Activated CD8-positive, alpha-beta T cell treated with anti-CD3 and anti-CD28 coated beads for 36 hours (primary cell): ENCODE measurements at regions of chr12 and their contacts with region 1.

Region 1: DNA sequence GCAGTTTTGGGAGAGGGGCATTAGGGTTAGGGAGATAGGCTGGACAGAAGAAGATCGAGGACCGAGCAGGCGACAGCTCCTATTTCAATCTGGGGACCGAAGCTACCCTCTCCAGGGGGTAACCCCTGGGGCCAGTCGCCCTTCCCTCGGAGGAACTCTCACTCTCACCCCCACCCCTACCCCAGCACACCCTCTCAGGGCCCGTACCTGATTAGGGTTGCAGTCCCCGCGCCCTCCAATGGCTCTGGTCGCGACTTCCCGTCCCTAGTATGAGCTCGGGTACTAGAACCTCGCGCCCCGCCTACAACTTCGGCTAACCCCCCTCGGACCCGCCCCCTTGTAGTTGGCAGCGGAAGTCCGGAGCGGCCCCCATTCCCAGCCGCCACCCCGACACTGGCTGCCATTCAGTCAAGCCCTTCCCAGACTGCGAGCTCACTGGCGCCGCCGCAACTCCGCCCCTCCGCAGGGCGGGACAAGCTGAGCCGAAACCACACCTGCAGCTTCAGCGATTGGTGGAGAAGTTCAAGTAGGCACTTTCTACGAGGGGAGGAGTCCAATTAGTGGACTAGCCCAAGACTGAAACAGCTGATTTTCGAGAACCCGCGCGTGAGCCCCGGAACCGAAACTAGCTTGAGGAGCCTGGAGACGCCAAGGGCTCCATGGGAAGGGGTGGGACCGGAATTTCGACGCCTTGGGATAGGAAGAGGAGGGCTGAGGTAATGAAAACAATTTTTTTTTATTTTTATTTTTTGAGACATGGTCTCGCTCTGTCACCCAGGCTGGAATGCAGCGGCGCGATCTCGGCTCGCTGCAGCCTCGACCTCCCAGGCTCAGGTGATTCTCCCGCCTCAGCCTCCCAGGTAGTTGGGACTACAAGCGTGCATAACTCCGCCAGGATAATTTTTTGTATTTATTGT is at the start of gene STAT2:
- DNase-seq: peak; percentile 99
- ATAC-seq: peak; percentile 97
- H3K4me3 Mint-ChIP-seq: peak within 1 kb of the TSS; percentile 81
- H3K27ac Mint-ChIP-seq: peak within 1 kb of the TSS; percentile 95
- H3K4me1 Mint-ChIP-seq: peaks cover 20% of the 10 kb centered on the region
- H3K27me3 Mint-ChIP-seq: no peaks in the 10 kb centered on the region
- CTCF ChIP-seq: no peak
- total RNA-seq, gene STAT2: 64.4 to 69.7 TPM

Region 2: GRCh38 chr12:56224102-56224701 is 135.9 kb before region 1 on chr12 and contains the start of gene NABP2:
- CTCF ChIA-PET with region 1: interaction called, 3 read pairs
- POLR2A ChIA-PET with region 1: interaction called, 10 read pairs
- intact Hi-C with region 1: no loop called
- DNase-seq: peak; percentile 97
- ATAC-seq: peak; percentile 81
- H3K4me3 Mint-ChIP-seq: peak within 1 kb of the TSS; percentile 98
- H3K27ac Mint-ChIP-seq: peak within 1 kb of the TSS; percentile 87
- H3K4me1 Mint-ChIP-seq: peaks cover 27% of the 10 kb centered on the region
- H3K27me3 Mint-ChIP-seq: no peaks in the 10 kb centered on the region
- CTCF ChIP-seq: peak; percentile 89
- total RNA-seq, gene NABP2: 58.7 to 60.2 TPM

Region 3: DNA sequence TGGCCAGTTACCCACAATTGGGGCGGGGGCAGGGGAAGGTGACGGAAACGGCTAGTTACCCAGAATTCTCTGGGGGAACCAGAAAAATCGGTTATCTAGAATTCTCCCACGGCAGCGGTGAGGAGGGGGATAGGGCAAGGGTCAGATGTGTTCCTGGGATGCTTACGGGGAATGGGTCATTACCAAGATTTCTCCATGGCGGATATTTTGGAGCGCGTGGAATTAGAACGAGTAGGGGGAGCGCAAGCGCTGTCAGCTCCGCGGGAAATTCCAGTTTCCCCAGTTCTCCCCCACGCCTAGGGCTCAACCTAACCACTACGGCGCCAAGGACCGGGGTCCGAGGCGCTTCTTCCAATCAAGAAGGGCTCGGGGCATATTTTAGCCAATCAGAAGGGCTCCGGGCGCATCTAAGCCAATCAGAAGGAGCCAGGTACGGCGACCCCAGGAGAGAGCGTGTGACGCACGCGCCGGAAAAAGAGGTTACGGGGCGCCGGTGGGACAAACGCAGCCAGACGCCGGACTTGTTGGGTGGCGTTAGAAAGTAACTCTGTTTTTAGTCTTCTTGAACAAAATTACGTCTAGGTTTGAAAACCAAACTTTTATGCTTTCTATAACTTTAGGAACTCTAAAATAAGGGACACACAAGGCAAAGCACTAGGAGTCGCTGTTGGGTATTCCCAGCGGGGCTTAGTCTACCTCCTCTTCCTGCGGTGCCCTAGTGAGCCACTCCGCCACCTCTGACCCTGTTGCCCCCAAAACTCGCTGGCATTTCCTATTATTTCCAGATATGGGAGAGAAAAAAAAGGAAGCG is 26.2 kb before region 1 on chr12 and contains the start of gene PAN2:
- CTCF ChIA-PET with region 1: interaction called, 13 read pairs
- POLR2A ChIA-PET with region 1: interaction called, 49 read pairs
- intact Hi-C with region 1: loop called (anchors 2 kb)
- DNase-seq: peak; percentile 98
- ATAC-seq: peak; percentile 87
- H3K4me3 Mint-ChIP-seq: peak within 1 kb of the TSS; percentile 86
- H3K27ac Mint-ChIP-seq: peak within 1 kb of the TSS; percentile 99
- H3K4me1 Mint-ChIP-seq: peaks cover 40% of the 10 kb centered on the region
- H3K27me3 Mint-ChIP-seq: no peaks in the 10 kb centered on the region
- CTCF ChIP-seq: peak; percentile 61
- total RNA-seq, gene PAN2: 55.7 to 69.0 TPM

Region 4: DNA sequence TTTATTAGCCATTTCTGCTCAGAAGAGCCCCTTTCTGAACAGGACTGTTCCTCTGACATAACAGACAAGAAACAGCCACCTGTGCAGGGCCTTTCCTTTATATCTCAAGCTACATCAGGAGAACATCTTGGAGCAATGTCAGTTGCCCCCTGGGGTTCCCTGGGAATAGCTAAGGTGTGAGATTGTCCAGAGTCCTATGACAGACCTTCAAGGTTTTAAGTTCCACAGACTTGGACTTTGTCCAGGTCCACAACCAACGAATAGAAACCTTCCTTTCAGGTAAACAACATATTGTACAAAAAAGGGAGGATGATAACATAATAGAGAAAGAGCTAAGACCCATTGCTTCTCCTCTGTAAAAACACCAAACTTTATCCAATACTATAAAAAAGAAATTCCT is 18.5 kb before region 1 on chr12:
- CTCF ChIA-PET with region 1: interaction called, 12 read pairs
- POLR2A ChIA-PET with region 1: interaction called, 63 read pairs
- intact Hi-C with region 1: loop called (anchors 2 kb)
- DNase-seq: no peak
- ATAC-seq: no peak
- H3K4me3 Mint-ChIP-seq: no peak overlapping the region
- H3K27ac Mint-ChIP-seq: peak overlapping the region; percentile 10
- H3K4me1 Mint-ChIP-seq: peaks cover 36% of the 10 kb centered on the region
- H3K27me3 Mint-ChIP-seq: no peaks in the 10 kb centered on the region
- CTCF ChIP-seq: no peak

Region 5: DNA sequence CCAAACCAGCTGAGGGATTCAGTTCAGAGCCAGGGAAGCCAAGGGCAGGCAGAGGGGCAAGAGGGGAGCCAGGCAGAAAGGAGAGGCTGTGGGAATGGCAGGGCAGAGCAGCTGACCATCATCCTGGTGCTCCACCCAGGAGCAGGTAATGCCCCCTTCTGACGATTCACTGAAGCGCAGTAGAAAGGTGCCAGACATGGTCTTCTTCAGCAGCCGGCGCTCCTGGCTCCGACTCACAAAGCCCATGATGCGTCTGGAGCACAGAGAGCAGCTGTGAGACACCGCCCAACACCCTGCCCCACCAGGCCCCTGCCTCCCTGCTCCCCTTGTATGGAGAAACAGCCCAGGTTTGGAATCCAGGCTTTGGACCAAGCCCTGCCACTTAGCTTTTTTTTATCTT is 13.4 kb before region 1 on chr12:
- CTCF ChIA-PET with region 1: interaction called, 17 read pairs
- POLR2A ChIA-PET with region 1: interaction called, 63 read pairs
- intact Hi-C with region 1: no loop called
- DNase-seq: peak; percentile 51
- ATAC-seq: peak; percentile 46
- H3K4me3 Mint-ChIP-seq: no peak overlapping the region
- H3K27ac Mint-ChIP-seq: no peak overlapping the region
- H3K4me1 Mint-ChIP-seq: no peaks in the 10 kb centered on the region
- H3K27me3 Mint-ChIP-seq: no peaks in the 10 kb centered on the region
- CTCF ChIP-seq: peak; percentile 58

Region 6: DNA sequence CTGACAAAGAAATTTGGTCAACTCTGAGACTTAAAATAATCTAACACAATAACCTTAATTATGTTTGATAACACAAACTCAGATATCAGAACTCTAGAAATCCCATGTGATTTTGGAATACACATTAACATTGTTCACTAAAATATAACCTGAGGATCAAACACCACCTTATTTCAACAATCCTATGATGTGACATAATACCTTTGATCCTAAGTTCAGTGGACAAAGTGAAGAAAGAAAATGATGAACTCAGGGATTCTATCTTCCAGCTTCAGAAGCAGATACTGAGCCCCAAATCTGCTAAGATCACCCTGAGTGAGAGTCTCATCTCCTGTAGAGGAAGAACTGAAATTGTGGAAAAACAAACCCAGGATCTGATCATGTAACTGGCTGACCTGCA is 38.2 kb after region 1 on chr12:
- CTCF ChIA-PET with region 1: no interaction called
- POLR2A ChIA-PET with region 1: no interaction called
- intact Hi-C with region 1: no loop called
- DNase-seq: no peak
- ATAC-seq: no peak
- H3K4me3 Mint-ChIP-seq: no peak overlapping the region
- H3K27ac Mint-ChIP-seq: no peak overlapping the region
- H3K4me1 Mint-ChIP-seq: no peaks in the 10 kb centered on the region
- H3K27me3 Mint-ChIP-seq: no peaks in the 10 kb centered on the region
- CTCF ChIP-seq: no peak

Region 7: GRCh38 chr12:56448860-56449621 is 88.9 kb after region 1 on chr12 and contains the start of gene TIMELESS:
- CTCF ChIA-PET with region 1: interaction called, 8 read pairs
- POLR2A ChIA-PET with region 1: interaction called, 14 read pairs
- intact Hi-C with region 1: no loop called
- DNase-seq: peak; percentile 86
- ATAC-seq: peak; percentile 97
- H3K4me3 Mint-ChIP-seq: peak within 1 kb of the TSS; percentile 88
- H3K27ac Mint-ChIP-seq: peak within 1 kb of the TSS; percentile 93
- H3K4me1 Mint-ChIP-seq: peaks cover 24% of the 10 kb centered on the region
- H3K27me3 Mint-ChIP-seq: no peaks in the 10 kb centered on the region
- CTCF ChIP-seq: no peak
- total RNA-seq, gene TIMELESS: 48.7 to 49.2 TPM

Region 8: DNA sequence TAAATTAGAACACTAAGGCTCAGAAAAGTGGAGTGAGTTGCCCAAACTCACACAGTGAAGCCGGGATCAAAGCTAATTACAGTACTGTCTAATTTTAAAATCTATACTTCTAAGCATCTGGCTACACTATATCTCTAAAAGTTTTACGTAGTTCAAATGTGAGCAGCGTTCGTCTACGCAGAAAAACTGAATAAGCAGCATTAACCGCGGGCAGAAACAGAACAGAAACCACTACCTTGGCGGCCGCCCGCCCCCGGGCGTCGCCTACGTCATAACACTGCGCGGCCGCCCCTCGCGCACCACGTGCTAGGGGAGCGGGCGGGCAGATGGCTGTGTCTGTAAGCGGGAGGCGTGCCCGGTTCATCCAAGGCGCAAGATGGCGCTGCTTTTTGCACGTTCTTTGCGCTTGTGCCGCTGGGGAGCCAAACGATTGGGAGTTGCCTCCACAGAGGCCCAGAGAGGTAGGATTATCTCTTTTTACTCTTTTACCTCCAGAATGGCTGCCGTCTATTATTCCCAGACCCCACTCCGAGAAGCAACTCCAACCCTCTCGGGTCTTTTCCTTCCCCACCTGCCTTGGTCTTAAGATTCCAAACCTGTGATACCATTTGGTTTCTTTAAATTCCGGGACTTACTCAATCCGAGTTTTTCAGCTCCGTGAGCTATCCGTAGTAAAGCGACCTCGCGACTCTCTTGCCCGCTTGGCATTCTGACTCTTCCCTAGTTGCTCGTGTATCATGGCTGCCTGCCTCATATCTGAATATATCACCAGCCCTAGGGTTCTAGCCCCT is 108.3 kb after region 1 on chr12 and contains the start of gene SPRYD4:
- CTCF ChIA-PET with region 1: interaction called, 14 read pairs
- POLR2A ChIA-PET with region 1: interaction called, 5 read pairs
- intact Hi-C with region 1: no loop called
- DNase-seq: peak; percentile 95
- ATAC-seq: peak; percentile 88
- H3K4me3 Mint-ChIP-seq: peak within 1 kb of the TSS; percentile 99
- H3K27ac Mint-ChIP-seq: peak within 1 kb of the TSS; percentile 98
- H3K4me1 Mint-ChIP-seq: peaks cover 35% of the 10 kb centered on the region
- H3K27me3 Mint-ChIP-seq: no peaks in the 10 kb centered on the region
- CTCF ChIP-seq: no peak
- total RNA-seq, gene SPRYD4: 3.2 to 3.3 TPM